ENCODE measurements at regions of chr16 and their contacts with region 1.

Region 1: GRCh38 chr16:84511180-84511824 is 6.8 kb upstream of the MEAK7 start:
- DNase-seq: peak; percentile 92
- ATAC-seq: peak; percentile 16
- H3K4me3 Mint-ChIP-seq: peak overlapping the region; percentile 39
- H3K27ac Mint-ChIP-seq: peak overlapping the region; percentile 87
- H3K4me1 Mint-ChIP-seq: peaks cover 86% of the 10 kb centered on the region
- H3K27me3 Mint-ChIP-seq: no peaks in the 10 kb centered on the region

Region 2: DNA sequence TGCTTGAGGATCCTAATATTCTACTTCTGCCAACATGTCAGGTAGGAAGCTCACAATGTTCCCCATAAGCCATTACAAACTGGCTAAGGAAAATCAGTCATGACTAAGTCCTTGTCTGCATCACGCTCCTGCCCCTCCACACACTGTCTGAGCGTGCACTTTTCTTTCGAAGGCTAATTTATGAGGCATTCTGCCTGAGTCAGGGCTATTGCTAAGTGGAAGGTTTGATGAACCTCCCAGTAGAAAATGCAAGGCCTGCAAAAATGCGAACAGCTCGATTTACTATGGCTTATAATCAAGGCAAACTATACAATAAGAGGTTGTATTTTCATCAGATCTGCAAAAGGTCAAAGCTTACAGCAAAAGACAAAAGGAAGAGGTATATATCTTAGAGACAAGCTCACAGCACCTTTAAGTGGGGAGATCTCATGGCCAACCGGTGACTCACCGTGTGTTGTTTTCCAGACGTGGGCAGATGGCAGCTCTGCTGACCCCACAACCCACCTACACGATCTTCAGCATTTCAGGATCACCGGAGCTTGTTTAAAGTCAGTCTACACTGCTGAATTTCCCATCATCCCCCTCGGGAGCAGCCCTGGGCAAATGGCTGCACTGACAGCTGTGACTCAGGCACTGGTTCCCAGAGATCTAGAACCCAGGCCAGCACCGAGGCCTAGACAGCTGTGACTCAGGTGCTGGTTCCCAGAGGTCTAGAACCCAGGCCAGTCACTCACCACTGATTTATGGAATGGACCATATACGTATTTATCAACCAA is 32.9 kb before region 1 on chr16:
- CTCF ChIA-PET with region 1: no interaction called
- DNase-seq: peak; percentile 31
- ATAC-seq: no peak
- H3K4me3 Mint-ChIP-seq: no peak overlapping the region
- H3K27ac Mint-ChIP-seq: no peak overlapping the region
- H3K4me1 Mint-ChIP-seq: no peaks in the 10 kb centered on the region
- H3K27me3 Mint-ChIP-seq: no peaks in the 10 kb centered on the region

Region 3: GRCh38 chr16:84548971-84549844 is 37.9 kb after region 1 on chr16:
- CTCF ChIA-PET with region 1: interaction called, 101 read pairs
- DNase-seq: peak; percentile 76
- ATAC-seq: peak; percentile 53
- H3K4me3 Mint-ChIP-seq: peak overlapping the region; percentile 85
- H3K27ac Mint-ChIP-seq: peak overlapping the region; percentile 96
- H3K4me1 Mint-ChIP-seq: peaks cover 53% of the 10 kb centered on the region
- H3K27me3 Mint-ChIP-seq: no peaks in the 10 kb centered on the region

Region 4: GRCh38 chr16:84607694-84608093 is 96.4 kb after region 1 on chr16:
- CTCF ChIA-PET with region 1: interaction called, 25 read pairs
- DNase-seq: no peak
- ATAC-seq: peak; percentile 44
- H3K4me3 Mint-ChIP-seq: peak overlapping the region; percentile 96
- H3K27ac Mint-ChIP-seq: peak overlapping the region; percentile 91
- H3K4me1 Mint-ChIP-seq: peaks cover 96% of the 10 kb centered on the region
- H3K27me3 Mint-ChIP-seq: no peaks in the 10 kb centered on the region

Measured in activated CD8-positive, alpha-beta memory T cell treated with anti-CD3 and anti-CD28 coated beads, Interleukin-2, amount 10 ng/mL, durations not matched to agents 7 days and 5 days (primary cell).